AG04449 (cell line): ENCODE measurements at regions of chr14 and their contacts with region 1.

Region 1: DNA sequence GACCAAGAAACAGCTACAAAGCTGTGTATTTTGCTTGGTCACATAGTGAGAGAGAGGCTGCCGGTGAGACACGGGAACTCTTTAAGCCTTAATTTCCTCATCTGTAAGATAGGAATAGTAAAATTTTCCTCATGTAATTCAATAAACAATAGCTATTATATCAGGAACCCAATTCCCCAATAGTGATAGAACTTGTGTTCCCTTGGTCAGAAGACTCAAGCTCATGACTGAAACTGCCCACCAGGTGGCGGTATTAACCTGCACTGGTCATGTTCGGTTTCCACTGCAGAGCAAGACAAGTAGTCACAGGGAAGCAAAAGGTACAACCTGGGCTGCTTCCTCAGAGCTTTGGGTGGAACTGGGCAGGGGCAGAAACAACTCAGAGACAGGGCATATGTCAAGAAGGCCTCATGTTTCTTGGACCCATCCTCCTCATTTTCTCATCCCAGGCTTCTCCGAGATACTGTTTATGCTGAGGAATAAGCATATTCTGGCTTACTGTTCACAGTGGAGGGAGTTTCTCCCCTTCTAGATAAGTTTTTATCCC is 4.2 kb upstream of the AJUBA start:
- DNase-seq: peak; percentile 49
- H3K4me3 ChIP-seq: no peak overlapping the region
- CTCF ChIP-seq: peak; percentile 79

Region 2: GRCh38 chr14:22955702-22956569 is 30.6 kb before region 1 on chr14:
- CTCF ChIA-PET with region 1: interaction called, 43 read pairs
- POLR2A ChIA-PET with region 1: interaction called, 10 read pairs
- DNase-seq: no peak
- H3K4me3 ChIP-seq: peak overlapping the region; percentile 66
- CTCF ChIP-seq: no peak

Region 3: GRCh38 chr14:23006544-23007419 is 20.2 kb after region 1 on chr14:
- CTCF ChIA-PET with region 1: interaction called, 62 read pairs
- POLR2A ChIA-PET with region 1: interaction called, 3 read pairs
- DNase-seq: peak; percentile 86
- H3K4me3 ChIP-seq: peak overlapping the region; percentile 70
- CTCF ChIP-seq: peak; percentile 54

Region 4: DNA sequence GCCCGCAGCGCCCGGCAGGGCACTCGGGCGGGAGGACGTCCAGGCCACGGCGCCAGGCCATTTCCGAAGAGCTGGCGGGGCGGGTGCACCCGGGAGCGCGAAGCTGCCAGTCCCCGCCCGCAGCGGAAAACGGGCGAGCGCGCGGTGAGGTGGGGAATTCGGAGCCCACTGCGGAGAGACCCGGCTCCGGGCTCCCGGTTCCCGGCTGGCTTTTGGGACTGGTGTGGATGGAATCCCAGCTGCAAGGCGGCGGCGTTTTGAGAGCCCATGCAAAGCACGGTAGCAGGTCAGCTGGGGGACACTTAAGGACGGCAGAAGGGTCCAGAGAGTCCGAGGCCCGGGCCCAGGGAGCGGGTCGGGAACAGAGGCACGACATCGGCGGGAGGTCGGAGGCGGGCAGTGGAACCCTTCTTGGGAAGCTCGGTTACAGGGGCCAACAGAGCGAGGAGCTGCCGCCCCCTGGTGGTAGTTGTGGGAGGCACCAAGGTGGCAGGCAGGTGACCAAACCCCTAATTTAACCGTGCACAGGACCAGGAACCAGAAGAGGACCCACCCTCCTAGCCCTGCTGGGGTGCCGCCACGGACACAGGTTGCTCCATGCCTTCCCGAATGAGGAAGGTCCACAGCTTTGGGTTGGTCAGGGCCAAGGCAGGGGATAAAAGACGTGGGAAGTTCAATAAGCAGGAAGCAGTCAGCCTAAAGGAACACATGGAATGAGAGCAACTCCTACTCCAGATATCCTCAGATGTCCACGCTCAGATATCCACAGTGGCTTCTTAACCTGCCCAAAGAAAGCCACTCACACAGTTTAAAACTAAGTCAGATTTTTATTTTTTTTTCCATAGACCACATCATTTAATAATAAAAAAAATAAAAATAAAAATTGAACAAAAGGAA is 71.4 kb after region 1 on chr14:
- CTCF ChIA-PET with region 1: interaction called, 1,423 read pairs
- POLR2A ChIA-PET with region 1: interaction called, 7 read pairs
- DNase-seq: no peak
- H3K4me3 ChIP-seq: peak overlapping the region; percentile 60
- CTCF ChIP-seq: peak; percentile 94

Region 5: GRCh38 chr14:23095196-23096108 is 108.9 kb after region 1 on chr14 and contains the start of gene C14orf119:
- CTCF ChIA-PET with region 1: interaction called, 23 read pairs
- POLR2A ChIA-PET with region 1: interaction called, 5 read pairs
- DNase-seq: peak; percentile 95
- H3K4me3 ChIP-seq: peak within 1 kb of the TSS; percentile 100
- CTCF ChIP-seq: no peak

Region 6: DNA sequence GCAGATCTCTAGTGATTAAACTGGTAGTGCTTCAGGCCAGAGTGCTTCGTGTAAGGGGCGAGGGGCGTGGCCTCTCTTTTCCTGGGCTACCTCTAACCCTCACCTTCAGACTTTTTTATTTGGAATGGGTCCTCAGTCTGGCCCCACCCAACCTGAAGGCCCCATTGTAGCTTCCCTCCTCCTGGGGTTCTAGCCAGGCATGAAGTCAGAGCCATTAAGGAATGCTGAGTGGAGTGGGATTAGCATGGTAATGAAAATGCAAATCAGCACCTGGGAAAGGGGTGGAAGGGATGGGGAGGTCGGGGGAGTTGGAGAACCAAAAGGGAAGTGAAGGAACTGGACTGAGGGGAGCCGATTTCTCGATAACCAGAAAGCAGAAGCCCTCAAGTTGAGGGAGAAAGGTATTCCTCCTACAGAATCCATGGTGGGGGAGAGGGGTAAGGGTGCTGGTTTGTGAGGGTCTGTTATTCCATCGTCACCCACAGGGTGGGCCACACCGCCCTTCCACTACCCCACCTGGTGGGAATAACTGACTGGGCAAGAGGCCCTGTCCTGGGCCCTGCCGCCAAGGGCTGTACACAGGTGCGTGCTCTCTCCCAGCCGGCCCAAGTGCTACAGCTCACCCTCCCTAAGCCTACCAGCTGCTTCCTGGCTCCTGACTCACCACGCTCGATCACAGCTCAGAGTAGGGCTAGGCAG is 550.9 kb after region 1 on chr14:
- CTCF ChIA-PET with region 1: no interaction called
- POLR2A ChIA-PET with region 1: no interaction called
- DNase-seq: no peak
- H3K4me3 ChIP-seq: no peak overlapping the region
- CTCF ChIP-seq: no peak